Gastrocnemius medialis (tissue), 4 donors: ENCODE measurements at regions of chr16 and their contacts with region 1.

Region 1: GRCh38 chr16:26169473-26169872 is 477.7 kb downstream of the HS3ST4 start:
- DNase-seq: no peak
- ATAC-seq: no peak
- H3K4me3 ChIP-seq: no peak overlapping the region
- H3K27ac ChIP-seq: no peak overlapping the region
- H3K4me1 ChIP-seq: no peaks in the 10 kb centered on the region
- H3K27me3 ChIP-seq: no peaks in the 10 kb centered on the region
- CTCF ChIP-seq: no peak
- POLR2A ChIP-seq: no peak

Region 2: DNA sequence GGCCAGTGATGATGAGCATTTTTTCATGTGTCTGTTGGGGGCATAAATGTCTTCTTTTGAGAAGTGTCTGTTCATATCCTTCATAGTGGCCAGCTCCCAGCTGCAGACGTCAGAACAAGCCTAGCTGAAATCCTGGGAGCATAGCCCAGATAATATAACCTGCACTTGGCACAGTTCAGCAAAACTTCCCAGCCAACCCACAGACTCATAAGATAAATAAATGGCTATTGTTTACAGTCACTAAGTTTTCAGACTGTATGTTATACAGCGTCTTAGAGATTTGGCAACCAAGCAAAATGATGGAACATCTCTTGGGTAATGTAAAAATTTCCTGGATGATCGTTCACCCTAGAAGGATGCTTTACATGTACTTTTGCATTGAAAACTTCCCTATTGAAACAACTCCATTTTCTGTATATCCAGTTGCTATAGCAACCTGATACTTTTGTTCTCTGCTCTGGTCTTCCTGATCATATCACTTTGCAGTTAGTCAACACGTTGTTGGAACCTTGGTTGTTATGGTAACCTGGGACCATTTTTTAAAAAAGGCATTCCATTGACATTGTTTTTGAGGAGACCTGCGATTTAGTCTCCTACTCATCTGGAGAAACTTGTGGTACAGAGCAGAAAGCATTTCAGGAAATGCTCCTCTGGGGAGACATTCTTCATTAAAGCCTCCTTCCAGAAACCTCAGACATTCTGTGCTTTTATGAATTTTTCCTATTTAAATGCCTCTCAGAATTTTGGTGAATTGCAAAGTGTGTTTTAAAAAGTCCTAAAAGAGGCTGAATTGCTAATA is 99.0 kb before region 1 on chr16:
- in situ Hi-C with region 1: no loop called
- intact Hi-C with region 1: no loop called
- DNase-seq: no peak
- ATAC-seq: no peak
- H3K4me3 ChIP-seq: no peak overlapping the region
- H3K27ac ChIP-seq: no peak overlapping the region
- H3K4me1 ChIP-seq: no peaks in the 10 kb centered on the region
- H3K27me3 ChIP-seq: no peaks in the 10 kb centered on the region
- CTCF ChIP-seq: no peak
- POLR2A ChIP-seq: no peak

Region 3: DNA sequence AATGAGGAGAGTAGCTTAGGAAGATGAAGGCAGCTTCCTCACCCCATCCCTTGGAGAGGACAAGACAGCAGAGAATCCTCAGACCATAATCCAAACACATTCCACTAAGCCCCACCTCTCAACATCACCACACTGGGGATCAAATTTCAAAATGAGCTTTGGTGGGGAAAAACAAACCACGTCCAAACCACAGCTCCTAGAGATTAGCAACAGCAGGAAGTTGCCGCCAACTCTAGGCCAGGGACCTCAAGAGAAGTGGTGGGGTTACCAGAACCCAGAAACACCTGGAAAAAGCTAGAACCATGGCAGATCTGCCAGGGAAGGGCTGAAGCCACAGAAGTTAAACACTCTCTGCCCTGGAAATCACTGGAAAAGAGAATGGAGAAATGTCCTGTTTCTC is 93.9 kb after region 1 on chr16:
- in situ Hi-C with region 1: loop called in 1 of 4 experiments (anchors 25 kb)
- intact Hi-C with region 1: no loop called
- DNase-seq: no peak
- ATAC-seq: no peak
- H3K4me3 ChIP-seq: no peak overlapping the region
- H3K27ac ChIP-seq: no peak overlapping the region
- H3K4me1 ChIP-seq: no peaks in the 10 kb centered on the region
- H3K27me3 ChIP-seq: no peaks in the 10 kb centered on the region
- CTCF ChIP-seq: no peak
- POLR2A ChIP-seq: no peak

Region 4: GRCh38 chr16:26583803-26584202 is 414.3 kb after region 1 on chr16:
- in situ Hi-C with region 1: no loop called
- intact Hi-C with region 1: no loop called
- DNase-seq: no peak
- ATAC-seq: no peak
- H3K4me3 ChIP-seq: no peak overlapping the region
- H3K27ac ChIP-seq: no peak overlapping the region
- H3K4me1 ChIP-seq: no peaks in the 10 kb centered on the region
- H3K27me3 ChIP-seq: no peaks in the 10 kb centered on the region
- CTCF ChIP-seq: no peak
- POLR2A ChIP-seq: no peak